Sigmoid colon (tissue), 7 donors: ENCODE measurements at regions of chr2 and their contacts with region 1.

Region 1: DNA sequence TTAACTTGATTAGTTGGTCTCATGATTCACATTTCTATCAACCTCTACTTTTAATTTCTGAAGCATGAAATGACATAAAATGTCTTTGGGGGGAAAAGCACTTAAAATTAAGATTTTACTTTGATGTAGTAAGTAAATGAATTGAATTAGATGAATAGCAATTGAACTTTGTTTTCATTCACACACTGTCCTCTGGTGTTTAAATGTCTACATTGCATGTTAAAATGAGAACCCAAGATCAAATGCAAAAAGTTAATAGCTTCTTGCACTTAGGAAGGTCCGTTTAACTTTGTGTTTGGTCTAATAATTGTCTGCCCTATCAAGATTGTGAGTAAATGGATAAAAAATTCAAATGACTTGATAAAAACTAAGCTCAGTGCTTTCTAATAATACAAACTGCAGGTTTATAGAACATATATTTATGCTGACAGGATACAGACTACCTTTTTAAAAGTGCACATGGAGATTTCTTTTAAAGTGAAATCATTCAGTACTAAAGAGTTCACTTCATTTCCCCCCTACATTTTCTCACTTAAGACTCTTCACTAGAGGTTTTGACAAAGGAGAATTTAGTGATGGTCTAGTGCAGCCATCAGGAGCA is 156.2 kb upstream of the NABP1 start:
- DNase-seq: no peak
- H3K4me3 ChIP-seq: no peak overlapping the region
- H3K27ac ChIP-seq: no peak overlapping the region
- H3K4me1 ChIP-seq: no peaks in the 10 kb centered on the region
- H3K27me3 ChIP-seq: no peaks in the 10 kb centered on the region
- CTCF ChIP-seq: peak; percentile 28 to 63 (median 62)
- EP300 ChIP-seq: no peak
- POLR2A ChIP-seq: no peak

Region 2: DNA sequence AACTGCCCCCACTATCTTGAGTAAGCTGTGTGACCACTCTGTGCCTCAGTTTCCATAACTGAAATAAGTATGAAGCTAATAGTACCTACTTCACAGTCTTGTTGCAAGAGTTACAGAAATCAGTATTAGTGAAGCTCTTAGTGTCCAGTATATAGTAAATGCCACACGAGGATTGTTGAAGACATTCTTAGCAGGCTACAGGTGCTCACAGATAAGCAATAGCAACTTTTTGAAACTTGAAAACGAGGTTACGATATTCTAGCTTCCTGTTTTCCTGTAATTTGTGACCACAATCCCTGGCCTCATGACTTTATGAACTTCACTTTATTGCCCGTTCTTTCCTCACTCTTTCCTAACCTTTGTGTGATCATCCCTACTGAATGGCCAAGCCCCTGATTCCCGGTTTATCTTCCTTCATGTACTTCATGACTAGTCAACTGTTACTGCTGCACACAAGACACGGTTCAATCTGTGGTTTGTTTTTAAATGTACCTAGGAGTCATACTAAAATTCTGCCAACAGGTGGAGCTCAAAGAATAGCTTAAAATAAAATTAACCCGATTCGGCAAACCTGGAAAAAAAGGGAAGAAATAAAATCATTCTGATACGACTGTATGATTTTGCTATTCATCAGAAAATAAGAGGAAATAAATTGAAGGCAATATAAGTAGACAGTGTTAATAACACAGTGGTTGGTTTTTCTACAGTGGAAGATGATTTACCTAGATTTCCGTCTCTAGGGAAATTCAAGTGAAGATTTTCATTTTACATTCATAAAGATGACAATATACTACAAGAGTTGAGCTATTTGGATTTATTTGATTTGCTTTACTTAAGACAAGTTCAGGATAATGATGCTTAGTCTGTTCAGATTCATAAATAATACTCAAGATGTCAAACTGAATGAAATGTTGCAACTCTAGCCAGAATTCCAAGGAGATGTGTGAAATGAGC is 469.6 kb before region 1 on chr2:
- intact Hi-C with region 1: loop called (anchors 5 kb)
- DNase-seq: no peak
- H3K4me3 ChIP-seq: no peak overlapping the region
- H3K27ac ChIP-seq: no peak overlapping the region
- H3K4me1 ChIP-seq: peaks cover 0 to 3% (median 0%) of the 10 kb centered on the region in 4 donors
- H3K27me3 ChIP-seq: no peaks in the 10 kb centered on the region
- CTCF ChIP-seq: peak in 3 of 4 experiments; percentile 31 to 47 (median 32)
- EP300 ChIP-seq: no peak
- POLR2A ChIP-seq: no peak

Region 3: GRCh38 chr2:191165176-191165643 is 356.5 kb before region 1 on chr2:
- intact Hi-C with region 1: loop called (anchors 1 kb)
- DNase-seq: no peak
- H3K4me3 ChIP-seq: no peak overlapping the region
- H3K27ac ChIP-seq: no peak overlapping the region
- H3K4me1 ChIP-seq: peaks cover 0 to 9% (median 0%) of the 10 kb centered on the region in 4 donors
- H3K27me3 ChIP-seq: no peaks in the 10 kb centered on the region
- CTCF ChIP-seq: peak in 3 of 4 experiments; percentile 16 to 59 (median 22)
- EP300 ChIP-seq: no peak
- POLR2A ChIP-seq: no peak